ENCODE measurements at regions of chr12 and their contacts with region 1.

Region 1: DNA sequence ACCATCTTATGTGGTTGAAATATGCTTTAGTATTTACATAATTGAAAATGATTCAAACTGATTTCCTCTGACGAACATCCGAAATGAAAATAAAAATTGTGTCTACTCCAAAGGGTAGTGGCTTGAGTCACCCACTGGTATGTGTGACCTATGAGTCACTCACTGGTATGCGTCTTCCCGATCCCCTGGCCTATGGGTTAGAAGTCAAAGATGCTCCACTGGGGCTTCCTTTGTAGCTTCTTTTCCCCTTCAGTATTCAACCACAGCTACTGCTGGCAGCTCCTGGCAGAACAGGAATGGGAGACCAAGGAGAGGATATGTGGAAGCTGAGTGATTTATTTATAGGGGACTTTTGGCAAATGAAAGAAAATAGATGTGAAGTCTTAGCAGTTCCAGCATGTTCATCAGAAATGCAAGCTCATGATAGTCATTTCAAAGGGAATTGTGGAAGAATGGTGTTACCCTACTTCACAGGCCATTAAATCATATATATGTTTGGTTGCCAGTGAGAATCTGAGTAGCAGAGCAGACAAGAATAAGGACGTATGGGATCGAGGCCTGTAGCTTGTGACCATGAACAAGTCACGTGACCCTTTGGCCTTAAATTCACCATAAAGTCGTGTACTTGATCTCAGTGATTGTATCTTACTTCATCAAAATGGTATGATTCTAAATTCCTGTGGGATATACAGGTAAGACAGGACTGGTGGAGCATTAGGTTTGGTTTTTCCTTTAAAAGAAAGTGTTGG is 108.3 kb downstream of the CRADD start:
- DNase-seq: peak; percentile 77
- H3K4me3 Mint-ChIP-seq: no peak overlapping the region
- H3K27ac Mint-ChIP-seq: peak overlapping the region; percentile 89
- H3K4me1 Mint-ChIP-seq: peaks cover 72% of the 10 kb centered on the region
- H3K27me3 Mint-ChIP-seq: no peaks in the 10 kb centered on the region

Region 2: GRCh38 chr12:92593734-92594402 is 1191.6 kb before region 1 on chr12:
- CTCF ChIA-PET with region 1: no interaction called
- intact Hi-C with region 1: loop called (anchors 10 kb)
- DNase-seq: peak; percentile 87
- H3K4me3 Mint-ChIP-seq: peak overlapping the region; percentile 55
- H3K27ac Mint-ChIP-seq: peak overlapping the region; percentile 96
- H3K4me1 Mint-ChIP-seq: peaks cover 78% of the 10 kb centered on the region
- H3K27me3 Mint-ChIP-seq: no peaks in the 10 kb centered on the region

Region 3: DNA sequence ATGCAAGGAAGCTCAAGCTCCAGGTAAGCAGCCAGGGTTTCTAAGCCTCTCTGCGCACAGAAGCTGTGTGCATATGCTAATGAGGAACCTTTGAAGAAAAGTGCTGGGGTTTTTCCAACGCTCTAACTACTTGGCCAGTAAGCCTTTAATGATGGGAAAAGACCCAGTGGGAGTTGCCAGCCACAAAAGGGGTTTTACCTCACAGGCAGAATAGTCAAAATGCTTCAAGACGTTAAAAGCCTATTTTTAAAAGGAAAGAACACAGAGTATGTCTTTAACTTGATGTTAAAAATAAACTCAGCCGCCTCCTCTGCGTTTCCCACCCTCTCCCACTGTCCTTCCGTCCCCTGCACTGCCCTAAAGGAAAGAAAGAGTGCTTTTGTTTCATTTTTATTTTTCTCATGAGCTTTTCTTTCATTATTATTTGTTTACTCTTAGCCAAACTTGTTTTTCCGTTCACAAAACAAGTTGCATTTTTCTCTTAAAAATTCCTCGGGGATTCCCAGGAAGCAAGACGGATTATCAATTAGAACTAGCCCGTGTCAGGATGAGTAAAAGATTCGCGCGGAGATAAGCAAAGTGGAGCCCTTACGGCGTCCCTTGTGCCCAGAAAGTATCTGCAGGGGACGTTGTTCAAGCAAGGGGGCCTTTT is 617.5 kb before region 1 on chr12:
- CTCF ChIA-PET with region 1: no interaction called
- intact Hi-C with region 1: loop called (anchors 5 kb)
- DNase-seq: peak; percentile 85
- H3K4me3 Mint-ChIP-seq: peak overlapping the region; percentile 49
- H3K27ac Mint-ChIP-seq: peak overlapping the region; percentile 67
- H3K4me1 Mint-ChIP-seq: peaks cover 17% of the 10 kb centered on the region
- H3K27me3 Mint-ChIP-seq: peaks cover 7% of the 10 kb centered on the region

Region 4: DNA sequence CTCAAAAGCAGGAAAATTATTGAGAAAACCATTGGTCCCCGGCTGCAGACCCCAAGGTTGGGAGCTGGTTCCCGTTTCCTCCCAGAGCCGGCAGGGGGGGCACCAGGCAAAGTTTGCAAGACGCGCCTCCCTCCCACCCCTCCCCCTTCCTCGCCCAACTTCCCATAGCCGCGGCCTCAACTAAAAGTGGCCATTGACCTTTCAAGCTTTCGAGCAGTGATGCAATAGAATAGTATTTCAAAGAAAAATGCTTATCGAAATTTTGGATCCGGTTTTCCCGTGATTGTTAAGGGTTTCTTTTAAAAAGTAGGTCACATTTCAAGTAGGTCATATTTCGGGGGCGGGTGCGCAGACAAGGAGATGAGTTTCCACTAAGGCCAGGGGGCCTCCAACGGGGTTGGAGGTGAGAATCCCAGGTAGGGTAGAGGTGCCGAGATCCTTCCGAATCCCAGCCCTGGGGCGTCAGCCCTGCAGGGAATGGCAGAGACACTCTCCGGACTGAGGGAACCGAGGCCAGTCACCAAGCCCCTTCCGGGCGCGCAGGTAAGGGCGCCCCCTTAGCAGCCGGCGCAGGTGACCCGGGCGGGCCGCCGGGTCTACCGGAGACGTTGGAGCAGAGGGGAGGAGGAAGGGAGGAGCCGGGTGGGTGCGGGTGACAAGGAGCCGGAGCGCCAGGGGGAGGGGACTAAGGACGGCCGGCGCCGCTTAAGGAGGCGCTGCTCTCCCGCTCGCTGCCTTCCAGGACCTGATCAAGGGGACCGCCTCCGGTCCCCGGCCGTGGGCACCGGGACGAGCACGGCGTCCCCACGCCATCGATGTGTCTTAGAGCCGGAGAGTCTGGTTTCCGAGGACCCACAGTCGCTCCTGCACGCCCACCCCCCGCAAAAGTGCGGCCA is 215.5 kb before region 1 on chr12:
- CTCF ChIA-PET with region 1: no interaction called
- intact Hi-C with region 1: loop called (anchors 1 kb)
- DNase-seq: peak; percentile 88
- H3K4me3 Mint-ChIP-seq: peak overlapping the region; percentile 83
- H3K27ac Mint-ChIP-seq: peak overlapping the region; percentile 81
- H3K4me1 Mint-ChIP-seq: peaks cover 15% of the 10 kb centered on the region
- H3K27me3 Mint-ChIP-seq: peaks cover 17% of the 10 kb centered on the region

Region 5: DNA sequence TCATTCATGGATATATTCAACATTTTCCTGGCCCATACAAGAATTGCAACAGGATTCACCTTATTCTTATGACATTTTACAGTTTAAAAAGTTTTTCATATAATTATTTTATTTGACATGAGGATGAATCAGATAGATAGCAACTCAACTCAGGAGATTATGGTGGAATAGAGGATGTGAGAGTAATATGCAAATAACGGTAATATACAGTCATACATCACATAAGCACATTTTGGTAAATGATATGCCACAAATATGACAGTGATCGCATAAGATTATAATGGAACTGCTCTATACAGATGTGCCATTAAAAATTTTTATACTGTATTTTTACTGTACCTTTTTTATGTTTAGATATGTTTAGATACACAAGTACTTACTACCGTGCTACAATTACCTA is 132.4 kb before region 1 on chr12:
- CTCF ChIA-PET with region 1: no interaction called
- intact Hi-C with region 1: no loop called
- DNase-seq: no peak
- H3K4me3 Mint-ChIP-seq: no peak overlapping the region
- H3K27ac Mint-ChIP-seq: no peak overlapping the region
- H3K4me1 Mint-ChIP-seq: no peaks in the 10 kb centered on the region
- H3K27me3 Mint-ChIP-seq: peaks cover 5% of the 10 kb centered on the region

Region 6: DNA sequence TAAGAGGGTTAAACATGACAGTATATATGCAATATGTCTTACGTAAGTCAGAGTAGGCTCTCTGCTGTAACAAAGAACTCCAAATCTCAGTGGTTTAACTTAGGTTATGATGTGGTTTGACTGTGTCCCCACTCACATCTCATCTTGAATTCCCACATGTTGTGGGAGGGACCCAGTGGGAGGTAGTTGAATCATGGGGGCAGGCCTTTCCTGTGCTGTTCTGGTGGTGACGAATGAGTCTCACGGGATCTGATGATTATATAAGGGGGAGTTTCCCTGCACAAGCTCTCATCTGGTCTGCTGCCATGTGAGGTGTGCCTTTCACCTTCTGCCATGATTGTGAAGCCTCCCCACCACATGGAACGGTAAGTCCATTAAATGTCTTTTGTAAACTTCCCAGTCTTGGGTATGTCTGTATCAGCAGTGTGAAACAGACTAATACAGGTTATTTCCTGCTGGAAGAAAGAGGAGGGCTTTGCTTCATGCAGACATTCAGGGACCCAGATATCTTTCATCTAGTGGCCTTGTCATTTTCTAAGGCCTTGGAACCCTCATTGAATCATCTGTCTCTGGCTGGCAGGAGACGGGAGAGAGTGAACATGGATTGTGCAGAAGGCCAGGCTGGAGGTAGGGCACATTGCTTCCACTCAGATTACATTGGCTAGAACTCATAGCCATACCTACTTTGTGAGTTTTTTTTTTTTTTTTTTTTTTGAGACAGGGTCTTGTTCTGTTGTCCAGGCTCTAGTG is 12.1 kb before region 1 on chr12:
- CTCF ChIA-PET with region 1: interaction called, 3 read pairs
- intact Hi-C with region 1: loop called (anchors 1 kb)
- DNase-seq: peak; percentile 87
- H3K4me3 Mint-ChIP-seq: peak overlapping the region; percentile 71
- H3K27ac Mint-ChIP-seq: peak overlapping the region; percentile 86
- H3K4me1 Mint-ChIP-seq: peaks cover 39% of the 10 kb centered on the region
- H3K27me3 Mint-ChIP-seq: no peaks in the 10 kb centered on the region

Region 7: GRCh38 chr12:93879476-93880421 is 94.3 kb after region 1 on chr12:
- CTCF ChIA-PET with region 1: no interaction called
- intact Hi-C with region 1: no loop called
- DNase-seq: no peak
- H3K4me3 Mint-ChIP-seq: no peak overlapping the region
- H3K27ac Mint-ChIP-seq: no peak overlapping the region
- H3K4me1 Mint-ChIP-seq: peaks cover 15% of the 10 kb centered on the region
- H3K27me3 Mint-ChIP-seq: no peaks in the 10 kb centered on the region

Region 8: DNA sequence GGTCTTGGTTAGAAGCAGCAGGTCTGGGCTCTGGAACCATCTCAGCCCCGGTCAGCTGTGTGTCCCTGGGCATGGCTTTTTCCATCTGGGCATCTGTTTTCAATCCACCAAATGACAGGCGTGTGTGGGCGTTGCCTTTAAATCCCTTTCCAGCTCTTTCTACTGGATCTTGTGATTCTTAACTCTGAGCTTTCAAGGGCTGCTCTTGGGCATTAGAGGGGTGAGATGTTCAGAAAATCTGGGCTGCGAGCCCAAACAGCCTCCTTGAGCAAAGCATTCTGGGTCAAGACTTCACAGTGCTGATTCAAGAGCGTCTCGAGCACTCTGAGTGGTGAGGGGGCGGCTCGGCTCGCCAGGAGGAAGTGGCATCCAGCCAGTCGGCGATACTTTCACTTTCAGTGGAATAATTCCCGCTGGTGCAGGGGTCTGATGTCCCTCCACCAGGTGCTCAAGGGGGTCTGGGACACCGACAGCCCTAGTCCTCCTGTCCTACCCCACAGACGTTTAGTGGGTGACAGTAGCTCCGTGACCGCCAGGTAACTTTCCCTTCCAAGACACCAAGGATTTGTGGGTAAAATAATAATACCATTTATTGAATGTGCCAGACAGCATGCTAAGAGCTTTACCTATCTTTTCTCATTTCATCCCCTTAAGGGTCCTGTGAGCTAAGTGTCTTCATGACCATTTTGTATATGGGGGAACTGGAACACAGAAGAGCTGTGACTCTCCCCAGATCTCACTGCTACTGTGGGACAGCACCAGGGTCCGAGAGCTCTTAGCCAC is 477.0 kb after region 1 on chr12:
- CTCF ChIA-PET with region 1: no interaction called
- intact Hi-C with region 1: loop called (anchors 10 kb)
- DNase-seq: peak; percentile 83
- H3K4me3 Mint-ChIP-seq: peak overlapping the region; percentile 89
- H3K27ac Mint-ChIP-seq: peak overlapping the region; percentile 96
- H3K4me1 Mint-ChIP-seq: peaks cover 31% of the 10 kb centered on the region
- H3K27me3 Mint-ChIP-seq: no peaks in the 10 kb centered on the region

Measured in activated naive CD4-positive, alpha-beta T cell treated with anti-CD3 and anti-CD28 coated beads for 36 hours (primary cell).